MCF 10A (cell line): ENCODE measurements at regions of chr1 and their contacts with region 1.

Region 1: DNA sequence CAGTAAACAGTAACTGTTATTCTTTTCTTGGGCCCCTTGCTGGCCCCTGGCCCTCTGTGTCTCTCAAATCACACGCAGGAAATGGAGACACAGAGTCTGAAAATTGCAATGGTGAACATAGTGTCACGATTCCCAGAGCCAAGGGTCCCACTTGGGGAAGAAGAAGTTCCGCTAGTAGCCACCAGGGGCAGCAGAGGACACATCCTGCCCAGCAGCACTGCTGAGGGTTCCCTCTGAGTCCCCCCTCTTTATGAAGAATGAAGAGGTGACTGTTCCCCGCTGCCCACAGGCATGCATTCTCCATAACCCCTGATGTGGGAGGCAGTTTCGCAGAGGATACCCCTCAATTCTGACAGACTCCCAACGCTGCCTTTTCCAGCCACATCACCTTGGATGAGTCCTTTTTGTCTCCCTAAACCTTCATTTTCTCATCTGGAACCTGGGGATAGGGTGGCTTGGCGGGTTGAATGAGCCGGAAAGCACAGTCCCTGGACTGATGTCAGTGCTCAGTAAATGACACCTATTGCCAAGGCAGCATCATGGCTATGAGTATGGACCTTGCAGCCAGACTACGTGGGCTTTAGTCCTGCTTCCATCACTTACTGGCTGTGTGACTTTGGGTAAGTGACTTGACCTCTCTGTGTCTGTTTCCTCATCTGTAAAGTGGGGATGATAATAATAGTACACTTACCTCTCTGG is 238.0 kb upstream of the TMEM51 start:
- DNase-seq: peak; percentile 59
- H3K4me3 Mint-ChIP-seq: no peak overlapping the region
- H3K27ac Mint-ChIP-seq: no peak overlapping the region
- H3K4me1 Mint-ChIP-seq: peaks cover 11% of the 10 kb centered on the region
- H3K27me3 Mint-ChIP-seq: no peaks in the 10 kb centered on the region
- CTCF ChIP-seq: peak; percentile 89

Region 2: DNA sequence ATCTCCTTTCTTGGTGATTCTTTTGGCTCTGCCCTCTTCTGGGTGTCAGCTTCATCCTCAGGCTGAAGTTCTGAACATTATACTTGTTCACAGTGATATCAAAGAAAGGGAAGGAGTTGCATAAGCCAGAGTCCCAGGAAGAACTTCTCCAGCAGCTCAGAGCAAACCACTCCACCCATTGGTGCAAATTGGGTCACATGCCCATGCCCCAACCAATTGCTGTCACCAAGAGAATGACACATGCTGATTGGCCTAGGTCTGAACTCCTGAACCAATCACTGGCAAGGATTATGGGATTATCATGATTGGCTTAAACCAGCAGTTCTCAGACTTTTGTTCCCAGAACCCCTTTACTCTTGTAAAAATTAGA is 18.4 kb before region 1 on chr1:
- CTCF ChIA-PET with region 1: interaction called, 13 read pairs
- POLR2A ChIA-PET with region 1: interaction called, 3 read pairs
- intact Hi-C with region 1: no loop called
- DNase-seq: no peak
- H3K4me3 Mint-ChIP-seq: no peak overlapping the region
- H3K27ac Mint-ChIP-seq: no peak overlapping the region
- H3K4me1 Mint-ChIP-seq: peaks cover 14% of the 10 kb centered on the region
- H3K27me3 Mint-ChIP-seq: no peaks in the 10 kb centered on the region
- CTCF ChIP-seq: no peak

Region 3: DNA sequence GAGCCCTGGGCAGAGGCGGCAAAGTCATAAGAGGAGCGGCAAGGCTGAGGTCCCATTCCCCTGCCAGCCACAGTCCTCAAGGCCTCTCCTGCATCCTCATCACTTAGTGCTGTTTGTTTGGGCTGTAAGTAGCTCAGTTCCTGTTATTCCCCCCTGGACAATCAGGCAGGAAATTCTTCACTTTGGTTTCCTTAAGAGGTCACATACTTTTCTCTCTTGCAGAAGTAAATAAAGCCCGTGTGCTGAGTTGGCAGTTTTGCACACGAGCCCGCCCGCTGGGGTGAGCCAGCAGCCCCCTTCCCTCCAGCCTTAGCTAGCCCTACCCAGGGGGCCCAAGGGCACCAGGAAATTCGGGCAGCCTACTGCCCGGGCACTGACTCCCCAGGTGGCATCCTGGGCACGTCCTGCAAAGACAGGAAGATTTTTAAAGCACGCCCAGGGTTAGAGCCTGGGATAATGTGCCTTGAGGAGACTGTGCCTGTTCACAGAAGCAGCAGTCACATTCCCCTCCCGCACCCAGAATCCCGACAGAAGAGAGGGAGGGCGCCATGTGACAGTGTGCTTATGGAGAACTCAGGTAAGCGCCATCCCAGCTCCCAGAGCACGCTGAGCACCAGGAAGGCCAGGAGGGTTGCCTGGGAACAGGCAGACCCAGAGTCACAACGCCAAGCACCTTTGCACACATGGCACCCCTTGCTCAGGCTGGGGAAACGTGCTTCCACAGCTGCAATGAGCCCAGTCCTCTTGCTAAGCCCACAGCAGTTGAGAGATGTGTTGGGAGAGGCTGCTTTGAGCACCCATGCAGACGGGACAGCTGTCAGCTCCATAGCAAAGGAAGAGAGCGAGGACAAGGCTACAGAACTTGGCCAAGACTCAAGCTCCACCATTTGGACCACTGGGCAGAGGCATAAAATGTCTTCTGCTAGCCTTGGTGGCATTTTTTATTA is 93.6 kb after region 1 on chr1:
- CTCF ChIA-PET with region 1: no interaction called
- POLR2A ChIA-PET with region 1: no interaction called
- intact Hi-C with region 1: no loop called
- DNase-seq: no peak
- H3K4me3 Mint-ChIP-seq: no peak overlapping the region
- H3K27ac Mint-ChIP-seq: no peak overlapping the region
- H3K4me1 Mint-ChIP-seq: no peaks in the 10 kb centered on the region
- H3K27me3 Mint-ChIP-seq: no peaks in the 10 kb centered on the region
- CTCF ChIP-seq: no peak